ENCODE measurements at regions of chr6 and their contacts with region 1.

Region 1: DNA sequence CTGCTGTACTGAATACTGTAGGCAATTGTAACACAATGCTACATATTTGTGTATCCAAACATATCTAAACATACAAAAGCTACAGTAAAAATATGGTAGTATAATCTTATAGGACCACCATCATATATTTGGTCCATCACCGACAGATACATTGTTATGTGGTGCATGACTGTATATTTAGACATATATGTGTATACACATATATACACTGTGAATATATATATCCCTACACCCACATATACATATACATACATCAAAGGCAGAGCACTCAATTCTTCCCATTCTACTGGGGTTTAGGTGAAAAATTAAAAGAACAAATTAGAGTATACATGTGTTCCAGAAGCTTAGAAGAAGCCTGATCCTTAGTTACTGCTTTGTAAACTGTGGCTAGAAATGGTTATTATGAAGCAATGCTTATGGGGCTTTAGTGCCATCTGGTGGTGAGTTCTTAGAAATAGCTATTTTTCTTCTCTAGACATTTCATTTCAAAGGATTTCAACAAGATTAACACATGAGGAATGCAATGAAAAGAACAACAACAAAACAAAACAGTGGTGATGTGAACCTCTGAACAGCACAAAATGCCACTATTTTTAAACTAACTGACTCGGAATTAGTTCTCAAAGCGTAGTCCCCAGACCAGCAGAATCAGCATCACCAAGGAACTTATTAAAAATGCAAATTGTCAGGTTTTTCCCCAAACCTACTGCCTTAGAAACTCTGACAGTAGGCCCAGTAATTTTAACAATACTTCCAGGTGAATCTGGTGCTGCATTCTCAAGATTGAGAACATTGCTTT is 38.0 kb downstream of the PKHD1 start:
- DNase-seq: no peak
- H3K4me3 Mint-ChIP-seq: no peak overlapping the region
- H3K27ac Mint-ChIP-seq: no peak overlapping the region
- H3K4me1 Mint-ChIP-seq: no peaks in the 10 kb centered on the region
- H3K27me3 Mint-ChIP-seq: peaks cover 14% of the 10 kb centered on the region

Region 2: DNA sequence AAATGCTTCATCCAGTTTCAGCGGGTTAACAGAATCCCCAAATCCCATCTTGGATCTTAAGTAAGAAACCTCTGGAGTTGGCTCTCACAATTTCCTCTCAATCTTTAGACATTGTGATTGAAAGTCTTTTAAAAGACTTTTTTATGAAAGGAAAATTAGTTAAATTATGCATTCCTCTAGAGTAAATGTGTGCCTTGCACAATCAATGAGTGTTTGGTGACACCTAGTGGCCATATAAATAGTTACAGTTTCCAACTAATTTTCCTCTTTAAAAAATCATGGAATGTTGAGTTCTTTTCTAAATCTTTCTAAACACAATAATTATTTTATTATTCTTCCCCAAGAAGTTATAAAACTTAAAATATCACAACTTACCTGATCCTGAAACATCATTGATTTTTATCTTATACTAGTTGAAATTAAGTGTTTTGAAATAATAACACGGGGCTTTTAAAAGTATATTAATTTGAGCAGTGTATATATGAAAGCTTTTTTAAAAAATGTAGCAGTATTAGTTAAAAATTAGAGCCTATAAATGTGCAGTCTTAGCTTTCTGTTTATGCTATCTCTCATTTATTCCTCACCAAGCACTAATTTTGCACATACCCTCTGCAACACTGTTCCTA is 28.4 kb before region 1 on chr6:
- CTCF ChIA-PET with region 1: interaction called, 24 read pairs
- DNase-seq: no peak
- H3K4me3 Mint-ChIP-seq: no peak overlapping the region
- H3K27ac Mint-ChIP-seq: no peak overlapping the region
- H3K4me1 Mint-ChIP-seq: no peaks in the 10 kb centered on the region
- H3K27me3 Mint-ChIP-seq: peaks cover 4% of the 10 kb centered on the region

Region 3: GRCh38 chr6:52063584-52064344 is 14.3 kb after region 1 on chr6:
- CTCF ChIA-PET with region 1: interaction called, 17 read pairs
- DNase-seq: peak; percentile 76
- H3K4me3 Mint-ChIP-seq: peak overlapping the region; percentile 25
- H3K27ac Mint-ChIP-seq: peak overlapping the region; percentile 88
- H3K4me1 Mint-ChIP-seq: peaks cover 12% of the 10 kb centered on the region
- H3K27me3 Mint-ChIP-seq: peaks cover 5% of the 10 kb centered on the region